Colonic mucosa (tissue), 4 donors: ENCODE measurements at regions of chr2 and their contacts with region 1.

Region 1: DNA sequence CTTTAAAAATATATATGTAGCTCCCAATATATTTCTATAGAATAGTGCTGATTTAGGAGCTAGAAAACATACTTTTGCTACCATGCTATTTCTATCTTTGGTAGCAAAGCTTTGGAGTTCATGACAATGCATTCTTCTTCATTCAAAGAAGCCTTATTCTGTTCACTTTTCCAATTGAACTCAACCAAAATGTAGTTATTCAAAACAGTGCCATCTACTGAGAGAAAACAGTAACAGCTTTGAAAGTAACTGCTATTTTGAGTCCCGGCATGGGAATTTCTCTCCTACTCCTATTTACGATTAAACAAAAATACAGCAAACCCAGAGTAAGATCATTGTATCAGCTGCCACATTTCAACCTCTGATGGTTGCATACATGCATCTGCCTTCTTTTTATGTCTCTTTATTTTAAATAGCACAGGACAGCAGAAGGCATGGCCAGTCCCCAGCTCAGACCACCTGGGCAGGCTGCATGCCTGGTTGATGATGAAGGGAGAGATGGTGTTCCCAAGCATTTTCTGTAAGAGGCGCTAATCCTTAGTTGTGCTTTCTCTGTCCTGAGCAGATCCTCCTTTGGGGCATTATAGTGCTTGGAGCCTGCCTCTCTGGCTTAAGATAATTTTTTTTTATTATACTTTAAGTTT is 69.7 kb upstream of the SULT1C3 start:
- DNase-seq: no peak
- H3K4me3 ChIP-seq: no peak overlapping the region
- H3K27ac ChIP-seq: no peak overlapping the region
- H3K4me1 ChIP-seq: no peaks in the 10 kb centered on the region
- H3K27me3 ChIP-seq: no peaks in the 10 kb centered on the region
- CTCF ChIP-seq: peak; percentile 14

Region 2: DNA sequence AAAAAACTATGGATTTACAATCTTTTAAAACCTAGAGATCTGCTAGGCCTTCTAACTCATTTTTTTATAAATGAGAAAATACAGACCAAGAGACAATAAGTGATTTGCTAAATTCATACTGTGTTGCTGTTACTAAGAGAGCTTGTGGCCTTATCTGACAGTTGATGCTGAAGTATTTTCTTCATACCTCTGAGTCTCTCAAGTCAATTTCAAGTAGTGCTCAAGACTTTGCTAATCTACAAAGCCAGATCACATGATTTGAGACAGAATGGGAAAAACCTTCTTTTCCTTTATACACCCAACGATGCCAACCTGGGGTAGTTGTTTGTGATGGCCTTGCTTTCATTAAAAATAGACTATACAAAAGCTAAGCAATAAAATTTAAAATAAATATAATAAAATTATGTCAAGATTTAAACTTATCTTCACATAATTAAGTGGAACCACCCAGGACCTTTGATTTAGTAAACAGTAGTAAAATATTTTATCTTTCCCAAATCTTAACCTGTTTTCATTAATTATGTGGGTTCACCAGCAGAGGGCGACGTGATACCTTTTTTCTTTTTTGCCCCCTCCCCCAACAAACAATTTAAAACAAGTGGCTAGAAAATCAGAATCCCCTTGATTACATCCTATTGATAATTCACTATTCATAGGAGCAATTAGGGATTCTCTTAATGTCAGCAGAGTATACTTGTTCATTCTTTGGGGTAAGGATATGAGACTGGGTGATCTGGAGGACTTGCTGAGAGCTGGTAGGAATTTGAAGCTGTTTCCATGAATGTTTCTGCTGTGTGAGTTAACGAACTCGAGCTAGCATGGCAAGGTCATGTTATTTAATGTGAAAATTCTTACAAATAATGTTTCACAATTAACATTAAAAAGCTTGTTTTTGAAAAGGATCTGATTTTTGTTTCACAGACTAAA is 233.4 kb before region 1 on chr2:
- intact Hi-C with region 1: loop called (anchors 10 kb)
- DNase-seq: no peak
- H3K4me3 ChIP-seq: no peak overlapping the region
- H3K27ac ChIP-seq: no peak overlapping the region
- H3K4me1 ChIP-seq: no peaks in the 10 kb centered on the region
- H3K27me3 ChIP-seq: no peaks in the 10 kb centered on the region
- CTCF ChIP-seq: peak; percentile 29

Region 3: GRCh38 chr2:108106731-108107130 is 63.4 kb before region 1 on chr2:
- intact Hi-C with region 1: no loop called
- DNase-seq: no peak
- H3K4me3 ChIP-seq: no peak overlapping the region
- H3K27ac ChIP-seq: no peak overlapping the region
- H3K4me1 ChIP-seq: no peaks in the 10 kb centered on the region
- H3K27me3 ChIP-seq: no peaks in the 10 kb centered on the region
- CTCF ChIP-seq: no peak